ENCODE measurements at regions of chr17 and their contacts with region 1.

Region 1: DNA sequence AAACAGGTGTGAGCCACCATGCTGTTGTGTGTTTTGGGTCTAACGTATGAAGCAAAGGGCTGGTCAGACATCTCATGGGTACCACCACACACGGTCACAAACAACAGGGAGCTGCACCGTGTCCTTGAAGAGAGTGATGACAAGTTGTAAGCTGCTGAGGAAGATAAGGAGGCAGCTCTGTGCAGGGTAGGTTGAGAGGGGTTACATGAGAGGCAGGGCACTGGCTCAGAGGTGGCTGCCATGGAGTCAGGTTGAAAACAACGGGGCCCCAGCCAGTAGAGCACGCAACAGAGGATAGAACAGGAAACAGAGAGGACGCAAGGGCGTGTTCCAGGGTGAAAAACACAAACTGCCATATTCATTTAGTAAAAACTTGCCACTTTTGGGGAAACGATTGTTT is 52.2 kb downstream of the TRARG1 start:
- DNase-seq: no peak
- H3K4me3 ChIP-seq: no peak overlapping the region
- H3K27ac ChIP-seq: no peak overlapping the region
- H3K4me1 ChIP-seq: no peaks in the 10 kb centered on the region
- H3K27me3 ChIP-seq: no peaks in the 10 kb centered on the region
- CTCF ChIP-seq: no peak

Region 2: GRCh38 chr17:1067282-1067956 is 264.3 kb before region 1 on chr17:
- CTCF ChIA-PET with region 1: no interaction called
- POLR2A ChIA-PET with region 1: no interaction called
- intact Hi-C with region 1: no loop called
- DNase-seq: no peak
- H3K4me3 ChIP-seq: no peak overlapping the region
- H3K27ac ChIP-seq: no peak overlapping the region
- H3K4me1 ChIP-seq: no peaks in the 10 kb centered on the region
- H3K27me3 ChIP-seq: no peaks in the 10 kb centered on the region
- CTCF ChIP-seq: no peak

Region 3: DNA sequence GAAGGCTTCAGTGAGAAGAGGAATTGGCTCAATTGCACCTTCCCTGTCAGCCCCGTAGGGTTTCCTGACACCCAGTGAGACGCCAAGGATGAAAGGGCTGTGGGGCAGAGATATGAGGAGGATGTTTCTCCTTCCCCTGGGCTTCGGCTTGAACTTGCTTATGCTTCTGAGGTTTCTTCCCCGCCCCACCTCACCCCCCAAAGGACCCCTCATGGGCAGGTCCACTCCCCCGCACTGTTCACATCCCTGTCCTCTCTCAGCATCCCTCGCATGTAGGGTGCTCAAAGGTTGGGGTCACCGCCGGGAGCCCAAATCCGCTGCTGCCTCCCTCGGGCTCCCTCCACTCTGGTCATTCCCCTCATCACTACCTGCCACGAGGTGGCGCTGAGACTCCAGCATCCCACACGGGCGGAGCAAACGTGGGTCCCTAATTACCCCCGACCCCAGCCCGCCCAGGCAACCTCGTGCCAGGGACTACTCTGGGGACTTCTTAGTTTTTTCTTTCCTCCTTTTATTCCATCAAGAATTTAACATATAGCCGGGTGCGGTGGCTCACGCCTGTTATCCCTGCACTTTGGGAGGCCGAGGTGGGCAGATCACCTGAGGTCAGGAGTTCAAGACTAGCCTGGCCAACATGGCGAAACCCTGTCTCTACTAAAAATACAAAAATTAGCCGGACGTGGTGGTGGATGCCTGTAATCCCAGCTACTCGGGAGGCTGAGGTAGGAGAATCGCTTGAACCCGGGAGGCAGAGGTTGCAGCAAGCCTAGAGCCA is 55.6 kb before region 1 on chr17:
- CTCF ChIA-PET with region 1: interaction called, 3 read pairs
- POLR2A ChIA-PET with region 1: no interaction called
- intact Hi-C with region 1: loop called (anchors 1 kb)
- DNase-seq: peak; percentile 75
- H3K4me3 ChIP-seq: no peak overlapping the region
- H3K27ac ChIP-seq: no peak overlapping the region
- H3K4me1 ChIP-seq: no peaks in the 10 kb centered on the region
- H3K27me3 ChIP-seq: peaks cover 7% of the 10 kb centered on the region
- CTCF ChIP-seq: peak; percentile 89